Activated T-helper 2 cell treated with anti-CD3 and anti-CD28 coated beads, Interferon-gamma antibody, Interleukin-2, Interleukin-4, amounts not matched to agents 10 μg/mL and 5 μg/mL and 100 μg/mL, durations not matched to agents 14 hours and 24 hours and 36 hours (primary cell): ENCODE measurements at regions of chr1 and their contacts with region 1.

Region 1: GRCh38 chr1:59025898-59026426 is 242.1 kb upstream of the JUN start:
- DNase-seq: no peak
- H3K4me3 Mint-ChIP-seq: peak overlapping the region; percentile 69
- H3K27ac Mint-ChIP-seq: no peak overlapping the region
- H3K4me1 Mint-ChIP-seq: peaks cover 16% of the 10 kb centered on the region
- H3K27me3 Mint-ChIP-seq: no peaks in the 10 kb centered on the region

Region 2: DNA sequence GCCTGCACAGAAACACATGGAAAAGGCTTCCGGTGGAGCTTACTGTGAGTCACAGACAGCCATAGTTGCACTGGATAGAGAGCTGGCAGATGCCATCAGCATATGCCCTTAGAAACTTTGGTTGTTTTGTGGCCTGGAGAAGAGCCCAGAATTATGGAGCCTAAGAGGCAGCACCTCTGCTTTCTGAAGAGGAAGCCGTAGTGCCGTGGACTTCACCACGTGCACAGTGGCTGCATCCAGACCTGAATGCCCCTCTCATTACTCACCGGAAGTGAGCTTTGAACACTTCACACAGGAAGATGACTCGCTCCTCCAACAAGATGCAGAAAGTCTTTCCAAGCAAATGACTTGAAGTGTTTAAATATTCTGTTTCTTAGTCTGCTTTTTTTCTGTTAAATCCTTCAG is 270.5 kb before region 1 on chr1:
- intact Hi-C with region 1: loop called (anchors 1 kb)
- DNase-seq: peak; percentile 30
- H3K4me3 Mint-ChIP-seq: peak overlapping the region; percentile 46
- H3K27ac Mint-ChIP-seq: peak overlapping the region; percentile 86
- H3K4me1 Mint-ChIP-seq: peaks cover 60% of the 10 kb centered on the region
- H3K27me3 Mint-ChIP-seq: no peaks in the 10 kb centered on the region

Region 3: GRCh38 chr1:58903514-58904298 is 122.3 kb before region 1 on chr1:
- intact Hi-C with region 1: loop called (anchors 1 kb)
- DNase-seq: peak; percentile 78
- H3K4me3 Mint-ChIP-seq: peak overlapping the region; percentile 71
- H3K27ac Mint-ChIP-seq: peak overlapping the region; percentile 79
- H3K4me1 Mint-ChIP-seq: peaks cover 27% of the 10 kb centered on the region
- H3K27me3 Mint-ChIP-seq: peaks cover 5% of the 10 kb centered on the region

Region 4: DNA sequence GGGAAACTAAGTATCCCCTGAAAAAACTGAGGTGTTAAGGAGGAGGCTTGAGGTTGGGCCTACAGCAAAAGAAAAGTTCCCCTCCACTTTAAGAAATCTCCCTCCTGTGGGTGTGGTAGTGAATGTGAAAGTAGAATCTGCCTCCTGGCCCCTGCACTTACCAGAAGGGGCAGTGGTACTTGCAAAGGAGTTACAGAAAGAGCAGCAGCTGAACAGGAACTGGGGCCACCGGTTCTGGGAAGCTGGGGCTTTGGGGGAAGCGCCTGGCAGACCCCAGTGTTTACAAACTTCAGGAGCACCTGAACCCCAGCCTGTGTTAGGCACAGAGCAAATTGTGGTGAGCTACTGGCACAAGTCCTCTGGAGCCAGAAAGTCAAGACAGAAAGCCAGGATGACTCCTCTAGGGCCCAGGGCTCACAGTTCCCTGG is 20.8 kb after region 1 on chr1:
- intact Hi-C with region 1: loop called (anchors 1 kb)
- DNase-seq: peak; percentile 40
- H3K4me3 Mint-ChIP-seq: peak overlapping the region; percentile 40
- H3K27ac Mint-ChIP-seq: peak overlapping the region; percentile 90
- H3K4me1 Mint-ChIP-seq: peaks cover 52% of the 10 kb centered on the region
- H3K27me3 Mint-ChIP-seq: no peaks in the 10 kb centered on the region

Region 5: DNA sequence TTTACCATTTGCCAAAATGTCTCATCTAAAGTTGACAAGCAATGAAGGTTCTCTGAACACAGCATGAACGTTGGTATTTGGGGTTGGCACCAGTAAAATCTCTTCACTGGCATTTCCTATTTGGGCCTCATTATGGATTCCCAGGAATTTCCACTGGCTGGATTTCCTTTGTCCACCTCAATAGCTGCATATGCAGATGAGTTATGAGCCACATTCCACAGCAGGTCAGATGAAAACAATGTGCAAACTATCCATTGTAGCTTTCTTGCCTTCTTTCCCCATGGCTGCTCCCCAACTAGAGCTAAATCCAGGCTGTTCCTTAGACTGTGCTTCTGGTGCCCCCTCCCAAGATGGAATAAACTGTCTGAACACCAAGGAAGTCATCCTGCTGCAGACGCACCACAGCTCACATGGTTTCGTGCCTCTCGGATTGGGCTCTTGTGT is 102.8 kb after region 1 on chr1:
- intact Hi-C with region 1: no loop called
- DNase-seq: no peak
- H3K4me3 Mint-ChIP-seq: no peak overlapping the region
- H3K27ac Mint-ChIP-seq: no peak overlapping the region
- H3K4me1 Mint-ChIP-seq: peaks cover 27% of the 10 kb centered on the region
- H3K27me3 Mint-ChIP-seq: peaks cover 4% of the 10 kb centered on the region

Region 6: DNA sequence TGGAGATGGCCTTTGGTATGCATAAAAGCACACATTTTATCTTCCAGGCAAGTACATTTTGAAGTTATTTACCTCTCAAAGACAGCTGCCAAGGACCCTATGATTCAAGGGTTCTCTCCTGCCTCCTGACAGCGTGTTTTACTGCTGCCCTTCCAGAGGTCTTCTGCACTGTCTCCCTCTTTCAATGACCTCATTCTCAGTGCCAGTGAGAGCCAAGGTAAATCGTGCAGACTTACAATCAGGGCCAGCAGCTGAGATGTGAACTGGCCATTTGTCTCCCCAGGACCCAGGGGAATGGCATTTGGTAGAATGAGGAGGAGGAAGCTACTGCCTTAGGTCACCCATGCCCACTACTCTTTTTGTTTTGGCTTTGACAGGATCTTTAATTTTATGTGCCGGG is 186.7 kb after region 1 on chr1:
- intact Hi-C with region 1: no loop called
- DNase-seq: no peak
- H3K4me3 Mint-ChIP-seq: no peak overlapping the region
- H3K27ac Mint-ChIP-seq: no peak overlapping the region
- H3K4me1 Mint-ChIP-seq: no peaks in the 10 kb centered on the region
- H3K27me3 Mint-ChIP-seq: no peaks in the 10 kb centered on the region

Region 7: GRCh38 chr1:59243550-59243949 is 217.6 kb after region 1 on chr1:
- intact Hi-C with region 1: no loop called
- DNase-seq: no peak
- H3K4me3 Mint-ChIP-seq: no peak overlapping the region
- H3K27ac Mint-ChIP-seq: no peak overlapping the region
- H3K4me1 Mint-ChIP-seq: no peaks in the 10 kb centered on the region
- H3K27me3 Mint-ChIP-seq: peaks cover 10% of the 10 kb centered on the region

Region 8: DNA sequence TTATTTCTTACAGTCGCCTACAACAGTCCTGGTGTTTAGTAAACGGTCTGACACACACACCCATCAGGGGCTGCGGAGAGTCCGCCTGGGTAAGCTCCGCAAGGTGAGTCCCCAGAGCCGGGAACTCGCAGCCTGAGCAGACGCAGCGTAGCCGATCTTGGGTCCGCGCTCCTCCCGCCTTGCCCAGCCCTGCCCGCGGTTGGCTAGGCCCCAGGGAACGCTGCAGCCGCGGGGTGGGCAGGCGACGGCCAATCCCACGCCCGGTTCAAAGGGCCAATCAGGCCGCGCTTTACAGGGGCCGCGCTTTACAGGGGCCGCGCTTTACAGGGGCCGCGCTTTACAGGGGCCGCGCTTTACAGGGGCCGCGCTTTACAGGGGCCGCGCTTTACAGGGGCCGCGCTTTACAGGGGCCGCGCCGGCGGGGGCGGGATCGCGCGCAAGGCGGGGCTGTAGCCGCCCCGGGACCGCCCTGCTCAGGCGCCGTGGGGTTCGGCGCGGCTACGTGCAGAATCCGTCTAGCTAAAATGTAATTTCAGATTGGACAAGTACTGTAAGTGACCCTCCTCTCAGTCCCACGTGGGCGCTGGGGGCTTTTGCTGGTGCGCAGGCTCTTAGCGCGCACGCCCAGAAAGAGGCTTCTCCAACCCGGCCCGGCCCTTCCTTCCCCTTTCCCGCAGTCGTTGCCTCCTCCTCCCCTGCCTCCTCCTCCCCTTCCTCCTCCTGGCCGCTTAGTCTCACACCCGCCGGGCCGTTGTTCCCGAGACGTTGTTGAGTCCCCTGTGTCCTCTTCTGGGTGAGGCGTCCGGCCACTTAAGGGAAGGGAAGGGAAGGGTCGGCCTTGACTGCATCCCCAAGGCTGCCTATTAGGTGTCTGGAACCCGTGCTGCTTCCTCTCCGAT is 270.6 kb after region 1 on chr1 and contains the start of gene FGGY:
- intact Hi-C with region 1: loop called (anchors 1 kb)
- DNase-seq: peak; percentile 85
- H3K4me3 Mint-ChIP-seq: peak within 1 kb of the TSS; percentile 93
- H3K27ac Mint-ChIP-seq: peak within 1 kb of the TSS; percentile 88
- H3K4me1 Mint-ChIP-seq: peaks cover 36% of the 10 kb centered on the region
- H3K27me3 Mint-ChIP-seq: no peaks in the 10 kb centered on the region
- total RNA-seq, gene FGGY: 10.5 and 13.4 TPM in 2 replicates

Region 9: DNA sequence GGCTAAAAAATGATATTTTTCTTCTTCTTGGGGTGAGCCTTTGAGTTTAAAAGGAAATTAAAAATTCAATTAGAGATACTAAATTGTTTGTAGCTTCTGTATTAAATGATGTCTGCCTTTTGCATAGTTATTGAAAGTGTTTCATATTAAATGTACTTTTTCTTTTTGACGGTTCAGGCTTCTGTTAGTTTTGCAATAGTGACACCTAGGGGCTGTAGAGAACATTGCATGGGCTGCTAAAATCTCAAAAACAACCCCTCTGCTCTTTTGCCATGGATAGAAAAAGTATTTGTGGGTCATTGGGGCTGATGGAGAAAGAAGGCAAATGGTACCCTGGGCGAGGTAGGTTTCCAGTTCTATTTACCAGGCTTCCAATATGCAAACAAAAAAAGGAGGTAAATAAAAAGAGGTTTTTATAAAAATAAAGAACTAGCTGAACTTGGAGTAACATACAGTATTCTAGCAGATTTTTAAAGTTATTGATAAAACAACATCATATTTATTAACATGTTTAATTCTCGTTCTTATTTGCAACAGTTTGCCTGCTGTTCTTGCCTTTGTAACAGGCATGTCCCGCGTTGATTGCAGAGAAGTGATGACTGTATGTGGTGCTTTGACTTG is 673.4 kb after region 1 on chr1:
- intact Hi-C with region 1: loop called (anchors 5 kb)
- DNase-seq: peak; percentile 13
- H3K4me3 Mint-ChIP-seq: no peak overlapping the region
- H3K27ac Mint-ChIP-seq: no peak overlapping the region
- H3K4me1 Mint-ChIP-seq: peaks cover 26% of the 10 kb centered on the region
- H3K27me3 Mint-ChIP-seq: no peaks in the 10 kb centered on the region